ENCODE measurements at regions of chr16 and their contacts with region 1.

Region 1: GRCh38 chr16:31354394-31355291 is at the start of gene ITGAX:
- DNase-seq: peak; percentile 91
- ATAC-seq: peak; percentile 86
- H3K4me3 Mint-ChIP-seq: peak within 1 kb of the TSS; percentile 12
- H3K27ac Mint-ChIP-seq: peak within 1 kb of the TSS; percentile 85
- H3K4me1 Mint-ChIP-seq: peaks cover 31% of the 10 kb centered on the region
- H3K27me3 Mint-ChIP-seq: peaks cover 8% of the 10 kb centered on the region
- total RNA-seq, gene ITGAX: 5.3 to 6.6 TPM

Region 2: DNA sequence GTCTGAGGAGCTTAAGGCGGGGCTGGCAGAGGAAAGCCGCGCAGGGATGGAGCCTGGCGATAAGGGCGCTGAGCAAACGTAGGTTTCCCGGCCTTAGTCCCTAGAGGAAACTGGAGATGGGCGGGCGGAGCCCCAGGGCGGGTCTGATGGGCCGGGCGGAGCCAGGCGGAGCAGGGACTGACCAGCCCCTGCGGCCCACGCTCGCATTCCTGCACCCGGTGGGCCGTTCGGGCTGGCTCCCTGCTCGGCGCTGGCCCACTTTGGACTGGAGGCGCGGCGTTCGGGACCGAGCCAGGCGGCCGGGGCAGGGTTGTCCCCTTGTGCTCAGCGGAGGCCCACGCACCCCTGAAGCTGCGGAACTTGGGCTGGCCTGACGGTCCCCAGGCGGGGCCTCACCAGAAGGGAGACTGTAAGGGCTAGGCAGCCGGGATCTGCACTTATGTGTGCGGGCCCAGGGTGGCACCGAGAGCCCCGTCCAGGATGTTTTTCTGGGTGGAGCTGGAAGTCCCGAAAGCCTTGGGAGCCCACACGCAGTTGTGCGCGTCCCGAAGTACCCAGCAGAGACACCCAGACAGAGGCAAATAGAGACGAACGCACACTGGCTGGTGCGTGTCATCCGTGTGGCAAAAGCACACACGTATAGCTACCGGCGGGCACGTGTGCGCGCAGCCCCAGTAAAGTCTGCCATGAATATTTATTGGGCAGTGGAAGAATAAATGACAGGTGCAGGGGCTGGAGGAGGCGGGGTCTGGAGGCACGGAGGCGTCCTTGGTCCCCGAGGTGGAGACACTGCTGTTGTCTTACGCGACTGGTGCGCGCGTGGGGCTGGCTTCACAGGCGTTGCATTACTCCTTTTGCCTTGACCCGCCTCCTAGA is 139.1 kb before region 1 on chr16:
- CTCF ChIA-PET with region 1: no interaction called
- POLR2A ChIA-PET with region 1: no interaction called
- intact Hi-C with region 1: loop called in 1 of 2 experiments (anchors 10 kb)
- DNase-seq: peak; percentile 45
- ATAC-seq: peak; percentile 45
- H3K4me3 Mint-ChIP-seq: peak overlapping the region; percentile 52
- H3K27ac Mint-ChIP-seq: no peak overlapping the region
- H3K4me1 Mint-ChIP-seq: peaks cover 23% of the 10 kb centered on the region
- H3K27me3 Mint-ChIP-seq: peaks cover 44% of the 10 kb centered on the region

Region 3: GRCh38 chr16:31421587-31421986 is 66.9 kb after region 1 on chr16:
- CTCF ChIA-PET with region 1: no interaction called
- POLR2A ChIA-PET with region 1: no interaction called
- intact Hi-C with region 1: loop called in 1 of 2 experiments (anchors 2 kb)
- DNase-seq: peak; percentile 82
- ATAC-seq: peak; percentile 98
- H3K4me3 Mint-ChIP-seq: no peak overlapping the region
- H3K27ac Mint-ChIP-seq: peak overlapping the region; percentile 47
- H3K4me1 Mint-ChIP-seq: peaks cover 10% of the 10 kb centered on the region
- H3K27me3 Mint-ChIP-seq: peaks cover 6% of the 10 kb centered on the region

Measured in activated CD4-positive, alpha-beta T cell treated with anti-CD3 and anti-CD28 coated beads for 36 hours (primary cell).